Activated CD4-positive, alpha-beta memory T cell treated with anti-CD3 and anti-CD28 coated beads for 36 hours (primary cell): ENCODE measurements at regions of chr19 and their contacts with region 1.

Region 1: GRCh38 chr19:11798391-11799330 is at the start of gene ZNF491:
- DNase-seq: peak; percentile 93
- H3K4me3 Mint-ChIP-seq: peak within 1 kb of the TSS; percentile 84
- H3K27ac Mint-ChIP-seq: no peak within 1 kb of the TSS
- H3K4me1 Mint-ChIP-seq: peaks cover 16% of the 10 kb centered on the region
- H3K27me3 Mint-ChIP-seq: no peaks in the 10 kb centered on the region
- total RNA-seq, gene ZNF491: 0.33 to 0.46 TPM

Region 2: GRCh38 chr19:11784356-11784755 is 14.3 kb before region 1 on chr19:
- CTCF ChIA-PET with region 1: interaction called, 12 read pairs
- POLR2A ChIA-PET with region 1: no interaction called
- intact Hi-C with region 1: no loop called
- DNase-seq: no peak
- H3K4me3 Mint-ChIP-seq: no peak overlapping the region
- H3K27ac Mint-ChIP-seq: no peak overlapping the region
- H3K4me1 Mint-ChIP-seq: no peaks in the 10 kb centered on the region
- H3K27me3 Mint-ChIP-seq: no peaks in the 10 kb centered on the region

Region 3: DNA sequence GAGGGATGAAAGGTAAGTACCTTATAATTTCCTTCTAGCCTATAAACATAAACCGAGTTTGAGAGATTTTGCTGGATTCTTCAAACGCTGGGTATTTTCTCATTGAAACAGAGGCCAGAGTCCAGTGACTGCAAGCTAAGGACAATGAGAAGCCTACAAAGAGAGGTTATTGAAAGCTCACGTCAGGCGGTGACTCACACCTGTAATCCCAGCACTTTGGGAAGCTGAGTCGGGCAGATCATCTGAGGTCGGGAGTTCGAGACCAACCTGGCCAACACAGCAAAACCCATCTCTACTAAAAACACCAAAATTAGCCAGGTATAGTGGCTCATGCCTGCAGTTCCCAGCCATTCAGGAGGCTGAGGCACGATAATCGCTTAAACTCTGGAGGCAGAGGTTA is 74.0 kb after region 1 on chr19:
- CTCF ChIA-PET with region 1: interaction called, 42 read pairs
- POLR2A ChIA-PET with region 1: no interaction called
- intact Hi-C with region 1: no loop called
- DNase-seq: no peak
- H3K4me3 Mint-ChIP-seq: no peak overlapping the region
- H3K27ac Mint-ChIP-seq: no peak overlapping the region
- H3K4me1 Mint-ChIP-seq: no peaks in the 10 kb centered on the region
- H3K27me3 Mint-ChIP-seq: no peaks in the 10 kb centered on the region

Region 4: GRCh38 chr19:11924886-11925650 is 126.4 kb after region 1 on chr19 and contains the start of gene ZNF700:
- CTCF ChIA-PET with region 1: interaction called, 32 read pairs
- POLR2A ChIA-PET with region 1: no interaction called
- intact Hi-C with region 1: no loop called
- DNase-seq: peak; percentile 97
- H3K4me3 Mint-ChIP-seq: peak within 1 kb of the TSS; percentile 96
- H3K27ac Mint-ChIP-seq: peak within 1 kb of the TSS; percentile 99
- H3K4me1 Mint-ChIP-seq: peaks cover 35% of the 10 kb centered on the region
- H3K27me3 Mint-ChIP-seq: no peaks in the 10 kb centered on the region
- total RNA-seq, gene ZNF700: 12.9 to 13.0 TPM

Region 5: DNA sequence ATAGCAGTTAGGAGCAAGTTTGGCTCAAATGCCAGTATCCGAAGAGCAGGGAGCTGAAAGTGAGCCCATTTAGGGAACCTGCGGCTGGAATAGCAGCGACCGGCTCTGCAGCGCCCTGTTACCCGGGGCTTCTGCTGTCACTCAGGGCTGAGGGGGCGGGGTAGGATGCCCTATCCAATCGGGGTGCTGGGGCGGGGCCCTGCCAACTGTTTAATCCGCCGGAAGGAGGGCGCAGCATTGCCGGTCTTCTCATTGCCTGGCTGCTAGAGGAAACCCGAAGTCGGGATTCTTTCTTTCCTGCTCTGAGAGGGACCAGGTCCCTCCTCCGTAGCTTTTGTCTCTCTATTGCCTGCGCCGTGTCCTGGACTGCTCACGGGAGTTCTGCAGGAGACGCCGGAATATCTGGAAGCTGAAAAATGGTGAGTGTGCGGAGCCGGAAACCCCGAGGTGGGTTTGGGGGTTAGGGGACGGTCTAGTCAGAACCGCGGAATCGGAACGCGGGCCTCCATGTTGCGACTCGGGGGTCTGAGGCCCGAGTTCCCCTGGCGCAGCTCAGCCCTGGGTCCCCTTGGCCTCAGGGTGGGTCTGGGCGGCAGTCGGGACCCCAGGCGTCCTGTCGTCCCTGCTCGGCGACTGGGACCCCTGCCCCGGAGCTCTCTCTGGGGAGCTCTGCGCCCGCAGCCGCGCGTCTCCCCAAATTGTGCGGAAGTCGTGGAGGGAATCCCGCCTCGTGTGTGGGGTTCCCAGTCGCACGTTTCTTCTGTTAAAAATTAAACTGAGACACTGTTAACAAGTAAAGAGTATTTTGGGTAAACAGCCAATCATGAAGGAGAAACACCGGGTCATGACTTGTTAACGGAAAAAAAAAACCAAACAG is 189.0 kb after region 1 on chr19:
- CTCF ChIA-PET with region 1: interaction called, 37 read pairs
- POLR2A ChIA-PET with region 1: no interaction called
- intact Hi-C with region 1: loop called (anchors 1 kb)
- DNase-seq: peak; percentile 97
- H3K4me3 Mint-ChIP-seq: peak overlapping the region; percentile 93
- H3K27ac Mint-ChIP-seq: peak overlapping the region; percentile 93
- H3K4me1 Mint-ChIP-seq: peaks cover 18% of the 10 kb centered on the region
- H3K27me3 Mint-ChIP-seq: no peaks in the 10 kb centered on the region

Region 6: GRCh38 chr19:12139885-12140547 is 341.4 kb after region 1 on chr19 and contains the start of gene ZNF20:
- CTCF ChIA-PET with region 1: interaction called, 24 read pairs
- POLR2A ChIA-PET with region 1: no interaction called
- intact Hi-C with region 1: loop called (anchors 2 kb)
- DNase-seq: peak; percentile 95
- H3K4me3 Mint-ChIP-seq: peak within 1 kb of the TSS; percentile 93
- H3K27ac Mint-ChIP-seq: peak within 1 kb of the TSS; percentile 70
- H3K4me1 Mint-ChIP-seq: peaks cover 36% of the 10 kb centered on the region
- H3K27me3 Mint-ChIP-seq: no peaks in the 10 kb centered on the region
- total RNA-seq, gene ZNF20: 1.5 to 2.7 TPM